ENCODE measurements at regions of chr7 and their contacts with region 1.

Region 1: GRCh38 chr7:96414931-96415292 is 93.0 kb upstream of the SLC25A13 start:
- DNase-seq: peak; percentile 66
- ATAC-seq: peak; percentile 55
- H3K4me3 Mint-ChIP-seq: no peak overlapping the region
- H3K27ac Mint-ChIP-seq: no peak overlapping the region
- H3K4me1 Mint-ChIP-seq: no peaks in the 10 kb centered on the region
- H3K27me3 Mint-ChIP-seq: peaks cover 10% of the 10 kb centered on the region

Region 2: DNA sequence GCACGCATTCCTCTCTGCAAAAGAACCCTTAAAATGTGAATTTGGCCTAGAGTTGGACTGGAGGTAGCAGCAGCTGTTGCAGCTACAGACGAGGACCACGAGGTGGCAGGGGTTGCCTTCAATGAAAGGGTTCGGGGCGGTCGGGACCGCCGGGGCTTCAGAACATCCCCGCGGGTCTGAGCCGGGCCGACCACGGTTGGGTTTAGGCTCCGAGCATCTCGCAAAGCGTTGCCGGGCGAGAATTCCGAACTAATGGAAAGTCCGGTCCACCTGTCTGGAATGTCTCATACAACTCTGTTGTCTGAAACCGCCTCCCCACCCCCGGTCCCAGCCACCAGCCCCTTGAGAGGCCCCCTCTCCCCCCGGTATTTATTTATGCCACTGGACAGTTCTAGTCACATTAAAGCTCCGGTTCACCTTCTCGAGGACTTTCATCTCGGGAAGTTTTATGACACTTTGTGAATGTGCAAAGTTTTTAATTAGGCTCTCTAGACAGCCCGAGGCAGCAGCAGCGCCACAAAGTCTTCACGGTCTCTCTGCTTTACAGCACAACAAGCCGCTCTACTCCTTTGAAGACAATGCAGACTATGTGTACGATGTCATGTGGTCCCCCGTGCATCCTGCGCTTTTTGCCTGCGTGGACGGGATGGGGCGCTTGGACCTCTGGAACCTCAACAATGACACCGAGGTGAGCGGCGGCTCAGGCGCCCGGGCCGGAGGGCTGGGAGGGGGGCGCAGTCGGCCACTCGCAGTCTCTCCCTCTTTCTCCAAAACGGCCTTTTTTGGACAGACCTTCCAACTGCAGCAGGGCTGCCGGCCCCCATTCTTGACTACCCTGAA is 339.2 kb before region 1 on chr7:
- CTCF ChIA-PET with region 1: interaction called, 3 read pairs
- POLR2A ChIA-PET with region 1: no interaction called
- intact Hi-C with region 1: loop called in 1 of 2 experiments (anchors 2 kb)
- DNase-seq: peak; percentile 71
- ATAC-seq: peak; percentile 81
- H3K4me3 Mint-ChIP-seq: peak overlapping the region; percentile 69
- H3K27ac Mint-ChIP-seq: no peak overlapping the region
- H3K4me1 Mint-ChIP-seq: peaks cover 8% of the 10 kb centered on the region
- H3K27me3 Mint-ChIP-seq: peaks cover 34% of the 10 kb centered on the region

Region 3: GRCh38 chr7:96440328-96440727 is 25.4 kb after region 1 on chr7:
- CTCF ChIA-PET with region 1: no interaction called
- POLR2A ChIA-PET with region 1: no interaction called
- intact Hi-C with region 1: no loop called
- DNase-seq: no peak
- ATAC-seq: no peak
- H3K4me3 Mint-ChIP-seq: no peak overlapping the region
- H3K27ac Mint-ChIP-seq: no peak overlapping the region
- H3K4me1 Mint-ChIP-seq: no peaks in the 10 kb centered on the region
- H3K27me3 Mint-ChIP-seq: peaks cover 8% of the 10 kb centered on the region

Region 4: DNA sequence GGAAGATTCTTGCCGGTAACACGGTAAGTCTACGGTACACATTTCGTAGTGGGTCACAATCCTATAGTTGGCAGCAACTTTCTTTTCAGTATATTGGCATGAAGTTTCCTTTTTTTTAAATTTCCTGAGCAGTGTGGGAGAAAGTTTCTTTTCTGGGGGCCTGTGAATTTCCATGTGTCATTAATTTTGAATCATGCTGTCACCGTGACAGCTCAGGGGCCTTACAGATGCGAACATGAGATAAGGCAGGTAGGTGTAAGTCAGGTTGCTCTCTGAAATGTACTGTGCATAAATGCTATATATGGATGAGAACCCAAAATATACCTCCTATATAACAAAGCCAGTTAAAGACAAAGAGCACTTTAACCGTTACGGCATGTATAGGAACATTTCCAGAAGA is 360.1 kb after region 1 on chr7:
- CTCF ChIA-PET with region 1: no interaction called
- POLR2A ChIA-PET with region 1: no interaction called
- intact Hi-C with region 1: no loop called
- DNase-seq: no peak
- ATAC-seq: no peak
- H3K4me3 Mint-ChIP-seq: no peak overlapping the region
- H3K27ac Mint-ChIP-seq: no peak overlapping the region
- H3K4me1 Mint-ChIP-seq: no peaks in the 10 kb centered on the region
- H3K27me3 Mint-ChIP-seq: peaks cover 25% of the 10 kb centered on the region

Region 5: DNA sequence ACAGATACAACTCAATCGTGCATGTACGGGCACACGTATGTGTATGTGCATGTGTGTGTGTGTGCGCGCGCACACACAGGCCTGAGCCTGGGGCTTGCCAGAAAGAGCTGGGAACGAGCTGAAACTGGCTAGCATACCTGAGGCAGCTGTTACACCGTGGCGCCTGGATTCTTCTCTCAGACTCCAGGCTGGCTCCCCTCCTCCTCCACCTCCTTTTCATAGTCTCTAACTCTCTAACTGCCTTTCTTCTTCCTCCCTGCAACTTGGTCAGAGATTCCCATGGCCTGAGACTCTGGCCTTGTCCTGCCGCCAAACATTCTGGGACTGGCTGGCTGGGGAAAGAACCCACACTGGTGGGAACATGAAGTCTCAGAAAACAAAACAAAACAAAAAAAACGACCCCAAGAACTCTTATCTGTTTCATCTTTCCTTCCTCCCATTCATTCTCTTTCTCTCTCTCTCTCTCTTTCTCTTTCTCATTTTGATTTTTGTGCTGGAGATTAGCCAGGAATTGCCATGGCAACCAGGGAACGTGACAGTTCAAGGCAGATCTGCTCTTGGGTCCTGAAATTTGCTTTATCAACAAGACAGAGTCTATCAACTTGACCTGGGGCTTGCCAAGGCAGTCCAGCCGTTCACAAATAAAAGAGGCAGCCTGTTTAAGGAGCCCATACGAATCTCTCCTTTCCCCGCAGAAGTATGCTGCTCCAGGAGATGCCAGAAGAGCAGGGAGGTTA is 371.5 kb after region 1 on chr7:
- CTCF ChIA-PET with region 1: no interaction called
- POLR2A ChIA-PET with region 1: no interaction called
- intact Hi-C with region 1: loop called in 1 of 2 experiments (anchors 5 kb)
- DNase-seq: no peak
- ATAC-seq: no peak
- H3K4me3 Mint-ChIP-seq: no peak overlapping the region
- H3K27ac Mint-ChIP-seq: no peak overlapping the region
- H3K4me1 Mint-ChIP-seq: no peaks in the 10 kb centered on the region
- H3K27me3 Mint-ChIP-seq: peaks cover 9% of the 10 kb centered on the region

Region 6: GRCh38 chr7:96899108-96899507 is 484.2 kb after region 1 on chr7:
- CTCF ChIA-PET with region 1: no interaction called
- POLR2A ChIA-PET with region 1: no interaction called
- intact Hi-C with region 1: loop called in 1 of 2 experiments (anchors 10 kb)
- DNase-seq: no peak
- ATAC-seq: no peak
- H3K4me3 Mint-ChIP-seq: no peak overlapping the region
- H3K27ac Mint-ChIP-seq: no peak overlapping the region
- H3K4me1 Mint-ChIP-seq: no peaks in the 10 kb centered on the region
- H3K27me3 Mint-ChIP-seq: peaks cover 12% of the 10 kb centered on the region

Measured in activated CD4-positive, alpha-beta T cell treated with anti-CD3 and anti-CD28 coated beads for 36 hours (primary cell).